ENCODE measurements at regions of chr1 and their contacts with region 1.

Region 1: DNA sequence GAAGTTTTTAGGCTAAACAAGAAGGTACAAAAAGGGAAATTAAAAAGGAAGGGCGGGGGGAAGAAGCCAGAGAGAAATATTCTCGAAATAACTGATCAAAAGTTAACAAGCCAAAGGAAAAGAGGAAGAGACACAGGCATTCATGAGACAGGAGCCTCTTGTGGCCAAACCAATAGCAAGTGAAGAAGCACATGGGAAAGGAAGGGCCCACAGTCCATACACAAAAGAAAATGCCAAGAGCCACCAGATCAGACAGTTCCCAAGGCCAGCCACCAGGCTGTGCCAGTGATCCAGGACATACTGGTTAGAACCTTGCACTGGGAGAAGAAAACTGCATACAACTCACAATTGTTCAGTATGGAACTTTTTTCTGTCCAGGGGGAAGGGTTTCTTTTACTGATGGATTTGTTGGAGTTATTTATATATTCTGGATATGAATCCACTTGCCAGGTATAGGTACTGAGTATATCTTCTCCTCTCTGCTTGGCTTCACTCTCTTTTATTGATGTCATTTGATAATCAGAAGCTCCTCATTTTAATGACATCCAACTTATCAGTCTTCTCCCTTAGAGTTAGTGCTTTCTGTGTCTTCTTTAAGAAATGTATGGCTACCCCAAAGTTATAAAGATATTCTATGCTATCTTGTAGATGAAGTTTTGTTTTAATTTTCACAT is 76.8 kb downstream of the CD46 start:
- DNase-seq: peak; percentile 80 to 93
- H3K4me3 ChIP-seq: no peak overlapping the region
- CTCF ChIP-seq: peak in 1 of 3 donors; percentile 80
- POLR2A ChIP-seq: no peak

Region 2: DNA sequence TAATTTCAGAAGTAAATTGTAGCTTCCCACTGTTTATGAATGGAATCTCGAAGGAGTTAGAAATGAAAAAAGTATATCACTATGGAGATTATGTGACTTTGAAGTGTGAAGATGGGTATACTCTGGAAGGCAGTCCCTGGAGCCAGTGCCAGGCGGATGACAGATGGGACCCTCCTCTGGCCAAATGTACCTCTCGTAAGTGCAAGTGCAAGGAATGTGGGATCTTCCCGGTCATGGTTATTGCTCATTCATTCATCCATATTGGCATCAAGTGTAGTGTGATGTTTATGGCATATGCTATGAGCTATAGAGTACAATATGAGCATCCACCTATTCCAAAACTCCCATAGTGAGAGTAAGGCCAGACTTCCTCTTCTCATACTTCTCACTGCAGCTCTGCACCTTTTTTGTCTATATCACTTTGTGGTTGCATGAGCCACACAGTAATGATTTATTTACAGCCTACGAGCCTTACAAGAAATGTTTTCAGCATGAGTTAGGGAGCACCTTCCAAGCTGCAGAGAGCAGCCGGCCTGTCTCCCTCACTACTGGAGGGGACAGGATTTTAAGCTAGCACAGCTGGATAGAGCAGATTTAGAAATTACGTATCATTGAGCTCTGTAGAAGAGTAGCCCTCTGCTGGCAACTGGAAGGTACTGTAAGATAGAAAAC is 208.6 kb before region 1 on chr1:
- intact Hi-C with region 1: no loop called
- DNase-seq: no peak
- H3K4me3 ChIP-seq: no peak overlapping the region
- CTCF ChIP-seq: no peak
- POLR2A ChIP-seq: no peak

Region 3: DNA sequence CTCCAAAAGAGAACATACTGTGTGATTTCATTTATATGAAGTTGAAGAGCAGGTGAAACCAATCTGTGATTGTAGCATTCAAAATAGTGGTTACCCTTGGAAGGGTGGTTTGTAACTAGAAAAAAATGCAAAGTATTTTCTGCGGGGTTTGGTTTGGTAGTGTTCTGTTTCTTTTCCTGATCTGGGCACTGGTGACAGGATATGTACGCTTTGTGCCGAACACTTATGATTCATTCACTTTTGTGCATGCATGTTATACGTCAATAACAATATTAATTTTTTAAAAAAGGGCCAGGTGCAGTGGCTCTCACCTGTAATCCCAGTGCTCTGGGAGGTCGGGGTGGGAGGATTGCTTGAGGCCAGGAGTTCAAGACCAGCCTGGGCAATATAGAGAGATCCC is 18.5 kb after region 1 on chr1:
- intact Hi-C with region 1: loop called (anchors 2 kb)
- DNase-seq: no peak
- H3K4me3 ChIP-seq: no peak overlapping the region
- CTCF ChIP-seq: no peak
- POLR2A ChIP-seq: no peak

Region 4: GRCh38 chr1:207868774-207869721 is 40.4 kb after region 1 on chr1:
- intact Hi-C with region 1: loop called (anchors 5 kb)
- DNase-seq: peak; percentile 71 to 96
- H3K4me3 ChIP-seq: peak overlapping the region; percentile 92
- CTCF ChIP-seq: no peak
- POLR2A ChIP-seq: peak in 1 of 2 donors; percentile 48

Region 5: GRCh38 chr1:207963427-207964194 is 135.0 kb after region 1 on chr1:
- intact Hi-C with region 1: loop called (anchors 5 kb)
- DNase-seq: peak; percentile 80 to 97
- H3K4me3 ChIP-seq: peak overlapping the region; percentile 4
- CTCF ChIP-seq: peak in 1 of 3 donors; percentile 94
- POLR2A ChIP-seq: peak in 1 of 2 donors; percentile 28

Region 6: GRCh38 chr1:208065862-208066261 is 237.2 kb after region 1 on chr1:
- intact Hi-C with region 1: no loop called
- DNase-seq: no peak
- H3K4me3 ChIP-seq: no peak overlapping the region
- CTCF ChIP-seq: no peak
- POLR2A ChIP-seq: no peak

Region 7: DNA sequence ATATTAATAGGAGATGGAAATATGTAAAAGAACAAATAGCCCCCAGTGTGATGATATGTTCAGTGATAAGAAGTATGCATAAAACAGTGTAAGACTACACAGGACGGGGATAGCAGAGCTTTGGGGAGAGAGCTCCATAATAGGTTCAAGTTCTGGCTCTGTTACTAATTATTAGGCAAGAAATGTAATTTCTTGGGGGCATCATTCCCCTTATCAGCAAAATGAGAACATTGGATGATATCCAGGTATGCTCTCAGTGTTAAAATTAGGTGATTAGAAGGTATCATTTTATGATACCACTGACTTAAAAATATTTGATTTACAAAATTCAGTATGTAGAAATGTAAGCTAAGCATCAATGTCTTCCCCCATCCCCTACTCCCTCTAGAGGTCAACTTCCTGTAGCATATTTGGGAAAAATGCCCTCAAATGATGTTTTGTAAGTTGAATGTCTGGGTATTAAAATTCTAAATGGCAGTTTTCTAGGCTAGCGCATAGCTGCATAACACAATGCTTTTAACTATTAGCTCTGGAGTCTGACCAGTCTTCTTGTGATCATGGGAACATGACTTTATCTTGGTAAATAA is 1169.2 kb after region 1 on chr1:
- intact Hi-C with region 1: no loop called
- DNase-seq: no peak
- H3K4me3 ChIP-seq: no peak overlapping the region
- CTCF ChIP-seq: no peak
- POLR2A ChIP-seq: no peak

Measured in lower leg skin (tissue), 4 donors.